Mammary epithelial cell (primary cell): ENCODE measurements at regions of chr19 and their contacts with region 1.

Region 1: DNA sequence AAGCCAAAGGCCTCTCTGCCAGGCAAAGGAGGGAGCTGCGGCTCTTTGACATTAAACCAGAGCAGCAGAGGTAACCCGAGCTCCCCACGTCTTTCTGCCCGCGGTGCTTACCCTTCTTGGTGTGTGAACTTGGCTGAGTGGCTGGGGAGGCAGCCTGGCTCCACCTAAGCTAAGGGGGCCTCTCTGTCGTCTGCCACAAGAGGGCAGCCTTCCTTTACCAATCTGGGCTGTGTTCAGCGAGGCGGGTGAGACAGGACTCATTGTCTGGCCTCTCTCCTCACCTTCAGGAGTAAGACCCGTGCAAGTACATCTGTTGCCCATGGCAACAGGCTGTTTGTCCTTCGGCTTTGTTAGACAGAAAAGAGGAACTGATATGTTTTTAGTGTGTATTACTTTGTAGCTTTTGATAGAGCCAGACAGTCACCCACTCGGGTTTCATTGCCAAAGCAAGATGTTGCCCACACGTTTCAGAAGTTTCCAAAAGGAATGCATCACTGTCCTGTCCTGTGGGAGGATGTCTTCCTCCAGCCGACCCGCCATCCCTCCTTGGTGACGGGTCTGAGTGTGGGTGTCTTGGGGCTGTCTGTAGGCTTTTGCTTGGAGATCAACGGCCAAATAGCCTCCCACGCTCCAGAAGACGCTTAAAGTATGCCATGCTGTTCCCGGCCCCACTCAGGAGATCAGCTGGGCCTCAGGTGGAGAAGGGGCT is 4.6 kb downstream of the POP4 start:
- DNase-seq: peak; percentile 70
- H3K4me3 ChIP-seq: no peak overlapping the region
- H3K27ac ChIP-seq: no peak overlapping the region
- H3K4me1 ChIP-seq: peaks cover 6% of the 10 kb centered on the region
- H3K27me3 ChIP-seq: no peaks in the 10 kb centered on the region
- CTCF ChIP-seq: peak; percentile 87 to 96

Region 2: DNA sequence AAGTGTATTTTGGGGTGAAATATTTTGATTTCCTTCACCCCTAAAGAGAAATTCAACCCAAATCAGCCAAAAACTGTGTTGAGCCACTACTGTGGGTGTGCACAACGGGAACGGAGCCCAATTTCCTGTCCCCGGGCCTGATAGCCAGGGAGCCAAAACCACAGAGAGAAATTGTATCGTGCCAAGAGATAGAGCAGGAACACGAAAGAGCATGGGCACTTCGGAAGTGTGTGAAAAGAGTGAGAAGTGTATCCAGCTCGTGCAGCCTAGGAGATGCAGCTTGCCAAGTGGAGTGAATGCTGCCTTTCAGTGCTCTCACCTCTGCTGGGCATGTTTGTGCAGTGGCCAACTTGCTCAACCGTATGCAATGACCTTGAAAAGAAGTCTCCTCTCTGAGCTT is 35.2 kb after region 1 on chr19:
- CTCF ChIA-PET with region 1: no interaction called
- dilution Hi-C with region 1: loop called (anchors 5 kb)
- in situ Hi-C with region 1: no loop called
- intact Hi-C with region 1: no loop called
- DNase-seq: peak; percentile 72
- H3K4me3 ChIP-seq: peak overlapping the region in 1 of 3 experiments; percentile 14
- H3K27ac ChIP-seq: no peak overlapping the region
- H3K4me1 ChIP-seq: peaks cover 21% of the 10 kb centered on the region
- H3K27me3 ChIP-seq: no peaks in the 10 kb centered on the region
- CTCF ChIP-seq: no peak

Region 3: GRCh38 chr19:29687244-29687896 is 76.7 kb after region 1 on chr19:
- CTCF ChIA-PET with region 1: no interaction called
- dilution Hi-C with region 1: no loop called
- in situ Hi-C with region 1: loop called in 1 of 2 experiments (anchors 5 kb)
- intact Hi-C with region 1: loop called (anchors 1 kb)
- DNase-seq: peak; percentile 78
- H3K4me3 ChIP-seq: no peak overlapping the region
- H3K27ac ChIP-seq: no peak overlapping the region
- H3K4me1 ChIP-seq: peaks cover 22% of the 10 kb centered on the region
- H3K27me3 ChIP-seq: no peaks in the 10 kb centered on the region
- CTCF ChIP-seq: no peak

Region 4: DNA sequence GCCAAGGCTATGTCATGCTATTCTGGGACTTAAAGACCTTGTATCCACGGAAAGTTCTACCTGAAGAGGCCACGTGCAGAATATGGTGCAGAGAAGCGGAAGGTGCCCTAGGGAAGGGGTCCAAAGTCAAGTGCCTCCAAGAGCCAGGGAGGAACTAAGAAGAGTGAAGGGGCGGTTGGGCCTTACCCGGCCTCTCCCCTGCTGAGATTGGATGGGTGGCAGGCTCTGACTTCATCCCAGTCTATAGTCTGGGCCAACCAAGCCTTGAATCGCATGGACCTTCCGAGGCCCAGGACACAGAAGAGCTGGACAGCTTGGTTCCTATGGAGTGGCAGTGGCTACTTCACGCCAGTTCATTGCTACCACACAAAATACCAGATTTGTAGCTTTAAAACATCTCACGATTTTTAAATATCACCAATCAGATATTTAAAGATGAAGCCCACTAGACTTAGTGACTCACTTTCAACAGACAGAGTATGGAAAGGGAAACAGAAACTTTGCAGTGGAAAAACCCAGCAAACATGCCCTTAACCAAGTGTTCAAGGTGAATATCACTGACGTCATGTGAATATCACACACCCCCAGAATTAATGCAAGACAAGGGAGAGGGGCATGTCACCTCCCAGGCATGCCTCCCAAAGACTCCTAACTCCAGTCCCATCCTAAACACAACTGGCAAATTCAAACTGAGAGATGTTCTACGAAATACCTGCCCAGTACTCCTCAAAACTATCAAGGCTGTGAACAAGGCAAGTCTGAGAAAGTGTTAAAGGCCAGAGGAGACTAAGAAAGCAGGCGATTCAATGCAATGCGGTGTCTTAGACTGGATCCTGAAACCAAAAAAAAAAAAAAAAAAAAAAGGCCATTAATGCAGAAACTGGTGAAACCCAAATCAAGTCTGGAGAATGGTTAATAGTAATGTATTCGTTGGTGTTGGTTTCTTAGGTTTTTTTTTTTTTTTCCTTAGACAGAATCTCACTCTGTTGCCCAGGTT is 94.1 kb after region 1 on chr19:
- CTCF ChIA-PET with region 1: no interaction called
- dilution Hi-C with region 1: no loop called
- in situ Hi-C with region 1: loop called (anchors 5 to 10 kb)
- intact Hi-C with region 1: no loop called
- DNase-seq: no peak
- H3K4me3 ChIP-seq: no peak overlapping the region
- H3K27ac ChIP-seq: no peak overlapping the region
- H3K4me1 ChIP-seq: no peaks in the 10 kb centered on the region
- H3K27me3 ChIP-seq: no peaks in the 10 kb centered on the region
- CTCF ChIP-seq: no peak